HEK293T (cell line): ENCODE measurements at regions of chr6 and their contacts with region 1.

Region 1: DNA sequence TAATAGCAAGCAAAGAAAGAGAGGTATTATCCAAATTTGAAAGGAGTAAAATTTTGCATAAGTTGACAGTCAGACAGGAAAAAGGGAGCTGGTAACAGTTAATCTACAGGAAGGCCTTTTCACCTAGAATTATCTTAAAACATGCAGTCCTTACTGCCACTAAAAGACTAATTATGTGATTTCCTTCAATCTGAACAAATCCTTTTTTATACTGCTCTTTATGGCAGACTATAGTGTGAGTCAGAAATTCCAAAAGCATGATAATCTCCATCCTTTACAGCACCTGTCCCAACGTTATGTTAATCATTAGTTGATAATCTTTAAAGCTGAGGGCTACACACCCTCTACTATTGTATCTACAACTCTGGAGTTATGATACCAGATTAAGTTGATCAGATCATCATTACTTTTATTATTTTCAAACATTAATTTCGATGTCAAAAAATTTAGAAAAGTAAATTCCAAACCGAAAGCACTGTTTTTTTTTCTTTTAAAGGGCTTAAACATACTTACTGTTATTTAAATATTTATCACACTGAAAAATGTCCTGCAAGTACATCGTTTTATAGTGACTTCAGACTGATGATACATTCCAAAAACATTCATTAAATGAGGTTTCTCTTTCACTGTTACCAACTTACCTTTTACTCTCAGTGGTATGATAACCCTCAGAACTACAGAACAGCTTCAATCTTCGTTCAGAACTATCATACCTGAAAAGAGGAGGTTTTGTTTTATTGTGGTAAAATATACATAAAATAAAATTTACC is 33.2 kb upstream of the AKAP7 start:
- DNase-seq: no peak

Region 2: GRCh38 chr6:131038597-131039344 is 63.3 kb before region 1 on chr6:
- CTCF ChIA-PET with region 1: no interaction called
- POLR2A ChIA-PET with region 1: no interaction called
- DNase-seq: no peak

Region 3: GRCh38 chr6:131065112-131065823 is 36.8 kb before region 1 on chr6:
- CTCF ChIA-PET with region 1: interaction called, 10 read pairs
- POLR2A ChIA-PET with region 1: no interaction called
- DNase-seq: no peak